ENCODE measurements at regions of chr10 and their contacts with region 1.

Region 1: DNA sequence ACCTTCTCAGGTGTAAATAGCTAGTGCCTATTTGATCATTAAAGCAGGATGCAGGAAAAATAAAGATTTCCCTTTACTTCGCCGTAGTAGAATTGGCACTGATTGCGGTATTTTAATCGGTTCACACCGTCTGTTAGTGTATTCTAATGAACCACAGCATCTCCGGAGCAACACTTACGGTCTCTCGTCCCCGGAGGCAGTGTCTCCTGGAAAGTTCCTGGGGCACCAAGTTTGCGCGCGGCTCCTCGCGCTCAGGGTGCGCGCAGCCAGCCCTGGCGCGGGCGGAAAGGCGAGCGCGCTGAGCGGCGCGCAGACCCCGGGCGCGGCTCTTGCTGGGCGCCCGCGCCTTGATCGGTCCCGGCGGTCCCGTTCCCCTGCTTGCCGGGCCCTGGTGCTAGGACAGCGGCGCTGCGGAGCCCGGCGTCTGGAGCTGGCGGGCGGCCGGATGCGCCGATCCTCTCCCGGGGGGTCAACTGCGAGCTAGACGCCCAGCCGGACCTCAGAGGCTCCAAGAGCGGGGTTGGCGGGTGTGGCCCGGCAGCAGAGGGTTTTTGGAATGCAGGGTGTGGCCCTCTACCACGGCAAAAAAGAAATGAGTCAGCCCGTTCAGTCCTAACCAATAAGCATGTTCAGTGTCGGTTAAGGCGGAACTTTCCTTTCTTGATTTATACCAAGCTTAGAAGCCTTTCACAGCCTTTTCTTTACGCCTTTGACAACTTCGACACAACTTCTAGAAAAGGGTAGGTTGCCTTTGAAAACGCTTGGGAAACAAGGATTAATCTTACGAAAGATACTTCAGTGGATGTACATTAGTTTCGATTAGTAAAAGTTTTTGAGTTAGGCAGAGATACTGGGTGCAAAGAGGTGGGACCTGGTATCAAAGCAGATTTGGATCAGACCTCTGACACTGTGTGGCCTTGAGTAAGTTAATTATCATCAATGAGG is 166.8 kb upstream of the ASAH2 start:
- DNase-seq: peak; percentile 93
- H3K4me3 ChIP-seq: peak overlapping the region; percentile 73 to 89 (median 77)
- H3K27ac ChIP-seq: peak overlapping the region; percentile 80 to 88 (median 82)
- H3K4me1 ChIP-seq: peaks cover 18 to 46% (median 39%) of the 10 kb centered on the region in 4 donors
- H3K27me3 ChIP-seq: no peaks in the 10 kb centered on the region
- CTCF ChIP-seq: peak in 1 of 3 experiments; percentile 26
- EP300 ChIP-seq: no peak
- POLR2A ChIP-seq: no peak

Region 2: GRCh38 chr10:50325449-50326171 is 92.5 kb before region 1 on chr10:
- intact Hi-C with region 1: loop called (anchors 5 kb)
- DNase-seq: no peak
- H3K4me3 ChIP-seq: no peak overlapping the region
- H3K27ac ChIP-seq: peak overlapping the region; percentile 42 to 71 (median 68)
- H3K4me1 ChIP-seq: peaks cover 37 to 52% (median 47%) of the 10 kb centered on the region in 4 donors
- H3K27me3 ChIP-seq: no peaks in the 10 kb centered on the region
- CTCF ChIP-seq: no peak
- EP300 ChIP-seq: no peak
- POLR2A ChIP-seq: no peak

Region 3: DNA sequence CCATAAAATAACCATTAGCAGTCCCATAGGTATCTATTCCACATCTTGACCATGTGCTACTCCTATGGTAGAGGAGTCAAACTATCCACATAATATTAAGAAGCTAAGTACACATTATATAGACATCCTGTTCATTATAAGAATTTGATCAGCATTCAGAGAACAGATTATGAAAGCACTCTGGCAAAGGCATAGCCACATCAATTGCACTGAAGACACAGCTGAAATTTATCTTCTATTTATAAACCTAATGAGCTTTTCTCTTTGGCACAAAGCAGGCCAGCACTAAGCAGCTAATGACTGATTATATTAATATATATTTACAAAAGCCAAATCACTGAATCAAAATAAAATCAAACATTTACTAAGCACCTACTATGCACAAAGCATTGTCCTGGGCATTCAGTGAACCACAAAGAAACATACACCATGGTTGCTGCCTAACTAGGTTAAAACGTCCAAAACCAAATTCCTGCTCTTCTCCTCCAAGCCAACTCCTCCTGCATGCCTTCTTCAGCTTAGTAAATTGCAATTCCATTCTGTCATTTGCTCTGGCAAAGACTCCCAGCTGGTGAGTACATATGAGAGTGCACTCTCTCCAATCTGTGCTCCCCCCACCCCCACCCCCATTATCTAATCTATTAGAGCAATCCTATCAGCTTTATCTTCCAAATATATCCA is 44.2 kb before region 1 on chr10:
- intact Hi-C with region 1: loop called (anchors 5 kb)
- DNase-seq: no peak
- H3K4me3 ChIP-seq: no peak overlapping the region
- H3K27ac ChIP-seq: peak overlapping the region; percentile 31 to 52 (median 42)
- H3K4me1 ChIP-seq: peaks cover 26 to 32% (median 28%) of the 10 kb centered on the region in 4 donors
- H3K27me3 ChIP-seq: no peaks in the 10 kb centered on the region
- CTCF ChIP-seq: no peak
- EP300 ChIP-seq: no peak
- POLR2A ChIP-seq: no peak

Region 4: GRCh38 chr10:50384898-50385297 is 33.3 kb before region 1 on chr10:
- intact Hi-C with region 1: no loop called
- DNase-seq: no peak
- H3K4me3 ChIP-seq: no peak overlapping the region
- H3K27ac ChIP-seq: peak overlapping the region in 1 of 4 donors; percentile 36
- H3K4me1 ChIP-seq: peaks cover 24 to 56% (median 29%) of the 10 kb centered on the region in 4 donors
- H3K27me3 ChIP-seq: no peaks in the 10 kb centered on the region
- CTCF ChIP-seq: no peak
- EP300 ChIP-seq: no peak
- POLR2A ChIP-seq: no peak

Region 5: GRCh38 chr10:50552771-50553535 is 134.8 kb after region 1 on chr10:
- intact Hi-C with region 1: loop called (anchors 5 kb)
- DNase-seq: no peak
- H3K4me3 ChIP-seq: no peak overlapping the region
- H3K27ac ChIP-seq: peak overlapping the region; percentile 50 to 73 (median 66)
- H3K4me1 ChIP-seq: peaks cover 63 to 85% (median 73%) of the 10 kb centered on the region in 4 donors
- H3K27me3 ChIP-seq: no peaks in the 10 kb centered on the region
- CTCF ChIP-seq: peak in 2 of 3 experiments; percentile 18 to 21
- EP300 ChIP-seq: no peak
- POLR2A ChIP-seq: no peak

Region 6: GRCh38 chr10:50624866-50625692 is 206.9 kb after region 1 on chr10:
- intact Hi-C with region 1: loop called (anchors 5 kb)
- DNase-seq: peak; percentile 93
- H3K4me3 ChIP-seq: peak overlapping the region; percentile 74 to 89 (median 84)
- H3K27ac ChIP-seq: peak overlapping the region; percentile 96 to 98 (median 98)
- H3K4me1 ChIP-seq: peaks cover 21 to 36% (median 31%) of the 10 kb centered on the region in 4 donors
- H3K27me3 ChIP-seq: no peaks in the 10 kb centered on the region
- CTCF ChIP-seq: peak; percentile 60 to 68 (median 61)
- EP300 ChIP-seq: no peak
- POLR2A ChIP-seq: no peak